Activated CD4-positive, alpha-beta memory T cell treated with anti-CD3 and anti-CD28 coated beads, Interleukin-2, amount 10 ng/mL, durations not matched to agents 7 days and 5 days (primary cell): ENCODE measurements at regions of chr11 and their contacts with region 1.

Region 1: DNA sequence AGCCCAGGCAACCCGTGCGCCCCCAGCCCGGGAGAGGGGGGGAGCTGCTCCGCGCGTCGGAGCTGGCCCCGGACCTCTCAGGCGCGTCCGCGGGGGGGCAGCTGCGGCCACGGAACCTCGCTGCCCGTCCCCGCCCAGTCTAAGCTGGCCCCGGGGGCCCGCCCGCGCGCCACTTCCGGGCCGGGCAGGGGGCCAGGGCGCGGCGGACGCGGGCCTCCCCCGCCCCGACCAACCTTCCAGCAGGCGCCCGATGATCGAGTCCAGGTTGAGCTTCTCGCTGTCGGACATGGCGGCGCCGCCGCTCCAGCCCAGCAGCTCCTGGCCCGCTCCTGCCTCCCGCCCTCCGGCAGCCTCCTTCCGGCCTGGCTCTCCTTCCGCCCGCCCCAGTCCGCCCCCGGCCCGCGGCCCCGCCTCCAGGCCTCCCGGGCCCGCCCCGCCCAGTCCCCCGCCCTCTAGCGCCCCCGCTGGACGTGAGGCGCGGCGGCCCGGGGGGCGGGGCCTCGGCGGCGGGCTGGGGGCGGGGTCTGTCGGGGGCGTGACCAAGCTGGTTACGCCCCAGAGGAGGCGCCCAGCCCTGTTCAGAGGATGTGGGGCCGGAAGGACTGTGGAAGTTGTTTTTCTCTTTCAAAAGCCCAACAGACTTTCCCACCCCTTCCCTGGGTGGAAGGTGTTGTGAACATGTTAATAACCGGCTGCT is at the start of gene PPP1CA:
- DNase-seq: peak; percentile 93
- H3K4me3 Mint-ChIP-seq: peak within 1 kb of the TSS; percentile 87
- H3K27ac Mint-ChIP-seq: peak within 1 kb of the TSS; percentile 99
- H3K4me1 Mint-ChIP-seq: peaks cover 68% of the 10 kb centered on the region
- H3K27me3 Mint-ChIP-seq: no peaks in the 10 kb centered on the region
- total RNA-seq, gene PPP1CA: 308 to 315 TPM

Region 2: DNA sequence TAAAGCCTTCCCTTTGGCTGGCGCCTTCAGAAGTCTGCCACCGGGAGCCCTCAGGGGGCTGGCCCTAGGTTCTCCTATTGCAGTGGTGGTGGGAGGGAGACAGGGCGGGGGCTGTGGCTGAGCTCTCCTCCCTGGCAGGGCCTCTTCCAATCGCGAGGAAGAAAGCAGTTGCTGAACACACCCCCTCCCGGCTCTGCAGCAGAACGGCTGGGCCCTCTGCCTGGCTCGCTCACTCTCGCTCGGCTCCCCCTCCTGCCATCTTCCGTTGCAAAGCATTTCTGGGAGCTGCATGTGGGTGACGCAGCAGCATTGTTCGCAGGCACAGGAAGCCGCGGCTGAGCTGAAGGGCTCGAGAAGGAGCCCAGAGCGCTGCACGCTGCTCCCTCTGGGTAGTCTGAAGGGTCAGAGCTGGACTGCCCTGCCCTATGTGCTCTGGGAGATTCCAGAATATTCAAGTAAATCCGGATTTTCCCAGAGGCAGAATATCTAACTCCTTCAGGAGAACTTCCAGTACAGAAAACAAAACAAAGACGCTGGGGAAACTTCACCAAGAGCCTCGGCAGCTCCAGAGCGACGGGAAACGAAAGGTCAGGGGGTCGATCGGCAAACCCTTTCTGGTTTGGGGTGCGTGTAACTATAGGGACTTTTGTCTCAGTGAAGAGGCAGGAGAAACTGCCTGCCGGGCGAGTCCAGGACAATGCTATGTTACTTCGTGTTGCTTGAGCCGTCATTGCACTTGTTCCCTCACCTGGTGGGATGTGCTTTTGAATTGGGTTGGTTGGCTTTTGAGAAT is 161.7 kb before region 1 on chr11:
- CTCF ChIA-PET with region 1: interaction called, 5 read pairs
- POLR2A ChIA-PET with region 1: interaction called, 13 read pairs
- DNase-seq: peak; percentile 97
- H3K4me3 Mint-ChIP-seq: peak overlapping the region; percentile 99
- H3K27ac Mint-ChIP-seq: peak overlapping the region; percentile 96
- H3K4me1 Mint-ChIP-seq: peaks cover 49% of the 10 kb centered on the region
- H3K27me3 Mint-ChIP-seq: no peaks in the 10 kb centered on the region

Region 3: GRCh38 chr11:67310221-67311050 is 91.2 kb before region 1 on chr11:
- CTCF ChIA-PET with region 1: no interaction called
- POLR2A ChIA-PET with region 1: no interaction called
- DNase-seq: no peak
- H3K4me3 Mint-ChIP-seq: no peak overlapping the region
- H3K27ac Mint-ChIP-seq: no peak overlapping the region
- H3K4me1 Mint-ChIP-seq: peaks cover 38% of the 10 kb centered on the region
- H3K27me3 Mint-ChIP-seq: no peaks in the 10 kb centered on the region

Region 4: DNA sequence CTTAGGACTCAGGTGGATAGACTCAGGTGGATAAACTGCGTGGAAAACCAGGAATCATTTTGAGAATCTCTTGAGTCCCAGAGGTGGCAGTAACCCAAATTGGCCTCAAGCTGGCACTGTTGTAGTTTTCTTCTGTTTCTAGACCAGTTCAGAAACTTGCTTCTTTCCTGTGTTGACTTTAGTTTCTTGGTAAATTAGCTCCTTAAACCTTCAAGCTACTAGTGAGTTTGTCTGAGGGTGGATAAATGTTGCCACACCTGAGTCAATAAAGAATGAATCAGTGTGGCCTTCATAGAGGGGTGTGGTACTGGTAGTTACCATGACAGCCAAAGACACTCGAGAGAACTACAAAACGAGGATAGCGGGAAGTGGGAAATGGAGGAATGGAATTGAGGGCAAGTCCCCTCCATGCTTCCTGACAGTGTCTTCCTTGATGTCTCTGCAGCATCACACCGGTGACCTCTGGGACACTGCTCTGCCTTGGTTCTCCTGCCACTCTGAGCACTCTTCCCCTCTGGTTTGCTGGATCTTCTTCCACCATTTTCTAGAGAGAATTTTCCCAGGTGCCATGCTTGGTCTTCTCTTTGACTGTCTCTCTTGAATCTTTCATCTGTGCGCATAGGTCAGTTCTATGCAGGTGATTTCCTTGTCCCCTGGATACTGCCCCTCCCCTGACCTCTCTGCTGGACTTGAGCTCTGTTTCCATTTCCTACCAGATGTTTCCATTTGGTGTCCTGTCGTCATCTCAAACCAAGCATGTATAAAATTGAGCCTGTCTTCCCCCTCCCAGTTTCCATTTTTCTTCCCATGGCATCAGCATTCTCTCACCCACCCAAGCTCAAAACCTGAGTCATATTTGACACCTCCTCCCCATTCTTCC is 55.5 kb before region 1 on chr11:
- CTCF ChIA-PET with region 1: interaction called, 14 read pairs
- POLR2A ChIA-PET with region 1: interaction called, 84 read pairs
- DNase-seq: no peak
- H3K4me3 Mint-ChIP-seq: no peak overlapping the region
- H3K27ac Mint-ChIP-seq: no peak overlapping the region
- H3K4me1 Mint-ChIP-seq: peaks cover 25% of the 10 kb centered on the region
- H3K27me3 Mint-ChIP-seq: no peaks in the 10 kb centered on the region

Region 5: GRCh38 chr11:67420646-67421420 is 19.2 kb after region 1 on chr11:
- CTCF ChIA-PET with region 1: interaction called, 10 read pairs
- POLR2A ChIA-PET with region 1: interaction called, 155 read pairs
- DNase-seq: peak; percentile 97
- H3K4me3 Mint-ChIP-seq: peak overlapping the region; percentile 71
- H3K27ac Mint-ChIP-seq: no peak overlapping the region
- H3K4me1 Mint-ChIP-seq: peaks cover 56% of the 10 kb centered on the region
- H3K27me3 Mint-ChIP-seq: peaks cover 12% of the 10 kb centered on the region

Region 6: DNA sequence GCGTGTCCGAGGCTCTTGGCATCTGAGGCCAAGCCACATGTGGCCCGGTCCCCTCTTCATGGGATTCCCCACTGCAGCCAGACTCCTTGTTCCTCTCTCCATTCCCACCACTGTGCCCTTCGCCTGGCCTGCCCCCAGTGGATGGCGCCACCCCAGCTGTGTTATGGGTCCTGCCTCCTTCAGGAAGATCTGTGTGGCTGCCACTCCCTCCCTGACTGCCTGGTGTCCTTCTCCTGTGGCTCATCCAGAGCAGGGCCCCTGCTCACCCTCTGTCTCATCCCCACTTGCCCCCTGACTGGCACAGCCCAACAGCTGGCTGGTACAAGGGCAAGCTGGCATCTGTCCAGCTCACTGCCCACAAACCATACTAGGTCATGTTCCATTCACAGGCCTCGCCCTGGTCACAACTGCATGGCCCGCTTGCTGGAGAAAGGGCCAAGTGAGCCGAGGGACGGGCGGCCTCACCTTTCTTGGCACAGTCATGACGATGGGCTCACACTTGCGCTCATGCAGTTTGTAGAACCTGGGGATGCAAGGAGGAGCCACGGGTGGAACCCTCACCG is 37.8 kb after region 1 on chr11:
- CTCF ChIA-PET with region 1: interaction called, 67 read pairs
- POLR2A ChIA-PET with region 1: interaction called, 361 read pairs
- DNase-seq: peak; percentile 54
- H3K4me3 Mint-ChIP-seq: peak overlapping the region; percentile 94
- H3K27ac Mint-ChIP-seq: peak overlapping the region; percentile 97
- H3K4me1 Mint-ChIP-seq: peaks cover 62% of the 10 kb centered on the region
- H3K27me3 Mint-ChIP-seq: no peaks in the 10 kb centered on the region

Region 7: GRCh38 chr11:67482825-67483798 is 81.5 kb after region 1 on chr11 and contains the start of gene AIP:
- CTCF ChIA-PET with region 1: interaction called, 8 read pairs
- POLR2A ChIA-PET with region 1: interaction called, 50 read pairs
- DNase-seq: peak; percentile 98
- H3K4me3 Mint-ChIP-seq: peak within 1 kb of the TSS; percentile 89
- H3K27ac Mint-ChIP-seq: peak within 1 kb of the TSS; percentile 99
- H3K4me1 Mint-ChIP-seq: peaks cover 55% of the 10 kb centered on the region
- H3K27me3 Mint-ChIP-seq: no peaks in the 10 kb centered on the region
- total RNA-seq, gene AIP: 152 to 159 TPM